Gastrocnemius medialis (tissue), 4 donors: ENCODE measurements at regions of chr17 and their contacts with region 1.

Region 1: DNA sequence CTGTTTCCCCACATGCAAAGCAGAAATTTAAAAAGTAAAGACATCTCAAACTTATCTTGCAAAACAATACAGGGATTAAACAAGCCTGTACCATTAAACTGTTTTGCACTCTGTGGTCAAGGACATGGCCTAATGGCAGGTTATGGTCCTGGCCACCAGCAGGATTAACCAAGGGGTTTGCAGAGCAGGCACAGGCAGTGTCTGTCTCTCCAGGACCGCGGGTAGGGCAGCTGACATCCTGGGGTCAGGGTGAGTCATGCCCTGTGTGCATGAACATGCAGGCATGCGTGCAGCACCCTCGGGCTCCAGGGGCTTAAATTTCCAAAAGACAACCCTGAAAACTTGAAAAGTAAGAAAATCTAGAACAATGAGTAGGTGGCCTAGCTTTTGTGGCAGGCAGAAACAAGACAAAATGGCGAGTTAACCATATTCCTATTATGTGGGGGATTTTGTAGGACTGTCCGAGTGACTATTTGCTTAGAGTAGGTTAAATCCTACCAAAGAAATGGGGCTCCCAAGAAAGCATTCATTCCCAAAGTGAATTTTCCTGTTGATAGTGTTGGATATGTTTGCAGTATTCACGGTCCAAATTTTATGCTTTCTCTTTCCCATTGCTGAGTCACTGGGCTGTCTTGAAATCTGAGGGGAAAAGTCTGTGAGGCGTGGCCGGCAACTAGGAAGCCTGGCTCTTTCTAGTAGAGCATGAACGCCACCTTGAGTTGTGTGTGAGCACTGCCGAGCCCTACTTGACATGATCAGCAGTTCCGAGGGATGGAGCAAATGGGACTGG is 158.4 kb upstream of the FAM20A start:
- DNase-seq: peak; percentile 77 to 90
- ATAC-seq: peak; percentile 98
- H3K4me3 ChIP-seq: peak overlapping the region; percentile 34 to 59 (median 42)
- H3K27ac ChIP-seq: peak overlapping the region; percentile 73 to 87 (median 78)
- H3K4me1 ChIP-seq: peaks cover 6 to 7% of the 10 kb centered on the region in 2 donors
- H3K27me3 ChIP-seq: no peaks in the 10 kb centered on the region
- CTCF ChIP-seq: peak; percentile 62 to 95 (median 83)
- POLR2A ChIP-seq: peak in 1 of 2 donors; percentile 5

Region 2: GRCh38 chr17:68124873-68125870 is 634.4 kb before region 1 on chr17:
- in situ Hi-C with region 1: no loop called
- intact Hi-C with region 1: no loop called
- DNase-seq: no peak
- ATAC-seq: no peak
- H3K4me3 ChIP-seq: no peak overlapping the region
- H3K27ac ChIP-seq: no peak overlapping the region
- H3K4me1 ChIP-seq: peaks cover 2 to 8% of the 10 kb centered on the region in 2 donors
- H3K27me3 ChIP-seq: no peaks in the 10 kb centered on the region
- CTCF ChIP-seq: no peak
- POLR2A ChIP-seq: no peak

Region 3: GRCh38 chr17:68196944-68197595 is 562.5 kb before region 1 on chr17:
- in situ Hi-C with region 1: loop called in 1 of 4 experiments (anchors 25 kb)
- intact Hi-C with region 1: no loop called
- DNase-seq: no peak
- ATAC-seq: no peak
- H3K4me3 ChIP-seq: peak overlapping the region; percentile 44 to 60 (median 54)
- H3K27ac ChIP-seq: no peak overlapping the region
- H3K4me1 ChIP-seq: peaks cover 31 to 40% of the 10 kb centered on the region in 2 donors
- H3K27me3 ChIP-seq: peaks cover 50 to 56% (median 54%) of the 10 kb centered on the region in 3 donors
- CTCF ChIP-seq: no peak
- POLR2A ChIP-seq: no peak

Region 4: DNA sequence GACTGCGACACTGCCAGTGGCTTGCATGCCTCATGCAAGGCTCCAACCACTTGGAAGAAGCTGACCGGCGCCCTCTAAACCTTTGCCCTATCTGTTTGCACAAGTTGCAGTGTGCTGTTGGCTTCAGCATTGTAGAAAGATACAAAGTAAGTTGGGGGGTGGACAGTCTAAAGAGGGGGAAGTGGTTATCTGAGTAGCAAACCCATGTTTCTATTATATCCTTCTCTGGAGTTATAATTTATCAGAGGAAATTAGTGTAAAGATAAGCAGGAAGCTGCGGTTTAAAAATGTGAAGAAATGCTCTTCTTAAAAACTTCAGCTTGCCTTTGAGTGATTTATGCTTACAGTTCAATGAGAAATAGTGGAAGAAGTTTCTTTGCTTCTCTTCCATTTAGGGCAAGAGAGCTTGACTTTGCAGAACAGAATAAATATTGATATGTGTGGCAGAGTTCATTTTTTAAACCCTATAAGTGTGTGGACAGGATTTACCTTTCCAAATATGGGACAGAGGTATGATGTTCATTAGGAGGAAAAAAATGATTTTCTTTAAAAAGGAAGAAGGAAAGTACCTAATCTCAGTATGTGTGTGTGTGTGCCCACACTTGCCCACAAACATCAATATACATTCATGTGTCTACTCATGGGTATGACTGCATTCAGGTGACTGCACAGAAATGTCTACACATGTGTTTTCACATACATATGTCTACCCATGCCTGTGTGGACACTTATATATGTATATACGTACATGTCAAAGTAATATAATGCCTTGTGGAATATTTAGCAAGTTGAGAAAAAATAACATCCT is 503.6 kb before region 1 on chr17:
- in situ Hi-C with region 1: loop called in 1 of 4 experiments (anchors 25 kb)
- intact Hi-C with region 1: no loop called
- DNase-seq: no peak
- ATAC-seq: no peak
- H3K4me3 ChIP-seq: no peak overlapping the region
- H3K27ac ChIP-seq: no peak overlapping the region
- H3K4me1 ChIP-seq: peaks cover 0 to 7% of the 10 kb centered on the region in 2 donors
- H3K27me3 ChIP-seq: no peaks in the 10 kb centered on the region
- CTCF ChIP-seq: no peak
- POLR2A ChIP-seq: no peak

Region 5: DNA sequence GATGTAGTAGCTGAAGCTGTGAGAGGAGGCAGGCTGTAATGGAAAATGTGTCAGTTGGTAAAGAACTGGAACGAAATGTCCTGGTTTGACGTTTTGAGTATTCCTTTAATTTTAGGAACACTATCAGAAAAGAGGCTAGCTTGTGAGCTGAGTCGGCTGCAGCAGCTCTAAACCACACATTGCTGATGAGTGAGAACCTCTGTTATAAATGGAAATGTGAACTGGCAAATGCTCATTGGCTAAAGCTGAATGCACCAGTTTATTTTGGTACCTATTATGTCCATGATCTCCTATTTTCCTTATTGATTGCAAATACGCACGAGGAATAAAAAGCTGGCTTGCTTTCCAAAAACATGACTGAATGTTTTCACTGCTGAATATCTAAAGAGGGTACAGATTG is 291.2 kb before region 1 on chr17:
- in situ Hi-C with region 1: no loop called
- intact Hi-C with region 1: loop called (anchors 5 kb)
- DNase-seq: no peak
- ATAC-seq: peak in 1 of 2 donors; percentile 54
- H3K4me3 ChIP-seq: no peak overlapping the region
- H3K27ac ChIP-seq: peak overlapping the region in 3 of 4 donors; percentile 21 to 72 (median 55)
- H3K4me1 ChIP-seq: peaks cover 4 to 7% of the 10 kb centered on the region in 2 donors
- H3K27me3 ChIP-seq: no peaks in the 10 kb centered on the region
- CTCF ChIP-seq: no peak
- POLR2A ChIP-seq: peak in 1 of 2 donors; percentile 20

Region 6: GRCh38 chr17:68539548-68540467 is 219.7 kb before region 1 on chr17:
- in situ Hi-C with region 1: loop called (anchors 10 to 25 kb)
- intact Hi-C with region 1: loop called (anchors 5 kb)
- DNase-seq: no peak
- ATAC-seq: no peak
- H3K4me3 ChIP-seq: no peak overlapping the region
- H3K27ac ChIP-seq: peak overlapping the region in 1 of 4 donors; percentile 31
- H3K4me1 ChIP-seq: peaks cover 18 to 23% of the 10 kb centered on the region in 2 donors
- H3K27me3 ChIP-seq: no peaks in the 10 kb centered on the region
- CTCF ChIP-seq: no peak
- POLR2A ChIP-seq: no peak